Activated CD4-positive, alpha-beta T cell treated with anti-CD3 and anti-CD28 coated beads, Interleukin-2, amount 10 ng/mL, durations not matched to agents 24 days and 14 days (primary cell): ENCODE measurements at regions of chr17 and their contacts with region 1.

Region 1: DNA sequence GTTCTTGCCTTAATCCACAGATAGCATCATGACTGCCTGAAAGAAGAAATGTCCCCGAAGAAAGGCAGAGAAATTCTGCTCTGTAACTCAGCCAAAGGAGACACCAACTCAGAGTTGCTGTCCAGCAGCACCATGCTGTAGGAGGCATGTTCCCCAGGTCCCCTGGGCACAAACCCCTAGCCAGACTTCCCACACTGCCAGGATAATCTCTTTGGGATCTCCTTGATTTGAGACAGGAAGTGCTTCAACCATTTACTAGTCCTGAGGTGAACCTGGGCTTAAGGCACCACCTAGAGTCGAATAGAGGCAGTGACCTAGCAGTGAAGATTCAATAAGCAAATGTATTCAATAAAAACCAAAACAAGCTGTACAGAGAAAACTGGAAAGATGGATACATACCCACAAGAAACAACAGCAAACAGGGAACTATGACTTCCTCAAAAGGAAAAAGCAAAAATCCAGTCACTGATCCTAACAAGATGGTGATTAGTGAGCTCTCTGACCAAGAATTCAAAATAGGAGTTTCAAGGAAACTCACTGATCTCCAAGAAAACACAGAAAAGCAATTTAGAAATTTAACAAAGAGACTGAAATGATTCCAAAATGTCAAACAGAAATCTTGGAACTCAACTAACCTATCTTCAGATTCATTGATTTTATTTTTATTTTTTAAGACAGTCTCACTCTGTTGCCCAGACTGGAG is 5.7 kb downstream of the OR4D2 start:
- DNase-seq: peak; percentile 86
- H3K4me3 Mint-ChIP-seq: no peak overlapping the region
- H3K27ac Mint-ChIP-seq: no peak overlapping the region
- H3K4me1 Mint-ChIP-seq: peaks cover 28% of the 10 kb centered on the region
- H3K27me3 Mint-ChIP-seq: peaks cover 14% of the 10 kb centered on the region

Region 2: GRCh38 chr17:58060596-58061191 is 111.8 kb before region 1 on chr17:
- intact Hi-C with region 1: no loop called
- DNase-seq: no peak
- H3K4me3 Mint-ChIP-seq: no peak overlapping the region
- H3K27ac Mint-ChIP-seq: no peak overlapping the region
- H3K4me1 Mint-ChIP-seq: no peaks in the 10 kb centered on the region
- H3K27me3 Mint-ChIP-seq: peaks cover 11% of the 10 kb centered on the region

Region 3: GRCh38 chr17:58120205-58120822 is 52.2 kb before region 1 on chr17:
- intact Hi-C with region 1: loop called (anchors 1 kb)
- DNase-seq: peak; percentile 87
- H3K4me3 Mint-ChIP-seq: no peak overlapping the region
- H3K27ac Mint-ChIP-seq: no peak overlapping the region
- H3K4me1 Mint-ChIP-seq: no peaks in the 10 kb centered on the region
- H3K27me3 Mint-ChIP-seq: peaks cover 12% of the 10 kb centered on the region